ENCODE measurements at regions of chr7 and their contacts with region 1.

Region 1: DNA sequence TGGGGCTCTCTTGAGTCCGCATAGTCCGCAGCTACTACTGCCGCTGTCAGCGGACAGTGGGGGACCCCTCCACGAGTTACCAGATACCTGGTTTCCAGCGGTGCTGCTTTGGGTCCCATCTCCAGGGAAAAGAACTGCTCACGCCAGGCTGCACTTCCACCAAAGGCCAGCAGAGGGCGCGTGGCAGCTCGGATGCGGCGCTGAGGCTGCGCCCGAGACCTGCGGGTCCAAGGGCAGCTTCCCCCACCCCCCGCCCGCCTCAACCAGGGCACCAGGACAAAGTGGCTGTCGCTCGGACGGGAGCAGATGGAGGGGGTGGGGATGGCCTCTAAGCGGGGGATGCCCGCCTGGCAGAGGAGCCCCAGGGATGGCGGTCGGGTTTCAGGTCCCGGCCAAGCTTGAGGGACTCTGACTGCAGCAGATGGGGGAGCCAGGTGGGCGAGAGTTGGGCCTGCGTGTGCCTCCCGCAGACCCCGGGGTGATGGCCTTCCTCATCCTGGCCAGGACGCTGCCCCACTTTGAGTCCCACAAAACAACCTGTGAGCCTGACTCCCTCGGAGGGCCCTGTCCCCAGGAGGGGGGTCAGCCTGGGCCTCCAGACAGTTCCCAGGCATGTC is 23.8 kb upstream of the ZNF735 start:
- DNase-seq: peak in 1 of 3 donors; percentile 12
- ATAC-seq: no peak
- H3K4me3 ChIP-seq: no peak overlapping the region
- H3K4me1 ChIP-seq: no peaks in the 10 kb centered on the region
- CTCF ChIP-seq: peak; percentile 14

Region 2: DNA sequence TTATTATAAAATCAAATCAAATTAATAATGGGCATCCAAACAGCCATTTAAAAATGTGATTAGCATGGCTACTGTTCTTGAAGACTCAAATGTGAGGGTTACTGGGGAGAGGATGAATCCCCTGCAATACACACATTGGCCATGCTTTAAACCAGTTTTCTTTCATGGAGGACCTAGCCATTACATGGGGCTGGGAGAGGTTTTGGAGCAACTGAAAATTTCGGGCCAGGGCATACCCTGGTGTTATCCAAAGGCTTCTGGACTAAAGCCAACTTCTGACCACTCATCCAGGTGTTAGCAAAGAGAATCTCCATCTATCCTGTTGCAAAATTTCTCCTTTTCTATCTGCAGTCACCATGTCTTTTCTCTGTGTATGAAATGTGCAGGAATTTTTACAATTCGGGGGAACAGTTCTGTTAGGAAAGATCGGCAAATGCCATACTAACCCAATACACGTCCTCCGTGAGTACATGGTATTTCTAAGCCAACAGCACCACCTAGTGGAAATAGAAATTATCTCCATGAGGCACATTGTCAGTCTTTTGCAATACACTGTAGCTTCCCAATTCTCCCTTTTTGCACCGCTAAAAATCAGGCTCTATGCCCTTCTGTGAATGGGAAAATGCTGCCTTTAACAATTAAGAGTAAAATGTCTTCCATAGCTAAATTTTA is 435.7 kb after region 1 on chr7:
- intact Hi-C with region 1: loop called (anchors 10 kb)
- DNase-seq: peak in 1 of 3 donors; percentile 44
- ATAC-seq: no peak
- H3K4me3 ChIP-seq: no peak overlapping the region
- H3K4me1 ChIP-seq: no peaks in the 10 kb centered on the region
- CTCF ChIP-seq: no peak

Region 3: GRCh38 chr7:64625114-64626082 is 442.2 kb after region 1 on chr7:
- intact Hi-C with region 1: loop called in 1 of 2 experiments (anchors 10 kb)
- DNase-seq: no peak
- ATAC-seq: no peak
- H3K4me3 ChIP-seq: no peak overlapping the region
- H3K4me1 ChIP-seq: no peaks in the 10 kb centered on the region
- CTCF ChIP-seq: peak; percentile 46